ENCODE measurements at regions of chr15 and their contacts with region 1.

Region 1: DNA sequence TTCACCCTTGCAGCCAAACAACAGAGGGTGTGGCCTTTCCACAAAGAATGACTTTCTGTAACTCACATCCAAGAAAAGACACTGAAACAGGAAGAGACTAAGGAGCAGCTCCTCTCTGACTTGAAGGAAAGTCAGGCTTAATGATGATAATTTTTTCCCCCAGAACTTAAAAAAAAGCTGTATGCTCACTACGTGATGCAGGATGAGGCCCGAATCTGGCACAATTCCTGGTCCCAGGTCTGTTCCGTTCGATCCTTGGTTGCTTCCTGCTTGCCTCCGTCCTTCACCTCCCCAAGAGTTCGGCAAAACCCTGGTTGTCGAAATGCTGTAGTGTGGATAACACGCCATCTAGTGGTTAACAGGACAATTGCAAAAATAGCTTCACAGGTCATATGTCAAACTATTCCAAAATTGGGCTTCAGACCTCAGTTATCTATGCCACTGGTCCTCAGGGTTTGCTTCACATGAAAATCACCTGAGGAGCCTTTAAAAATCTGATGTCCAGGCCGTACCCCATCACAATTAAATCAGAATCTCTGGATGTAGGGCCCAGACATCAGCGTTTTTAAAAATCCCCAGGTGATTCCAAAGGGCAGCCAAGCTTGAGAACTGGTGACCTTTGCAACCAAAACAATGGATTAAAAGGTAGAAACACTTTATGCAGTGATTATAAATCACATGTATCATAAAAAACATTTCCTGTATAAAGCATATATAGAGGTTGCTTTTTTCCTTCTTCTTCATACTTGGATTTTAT is 28.1 kb upstream of the SYNM start:
- DNase-seq: no peak
- ATAC-seq: peak; percentile 87

Region 2: GRCh38 chr15:98442379-98442833 is 634.3 kb before region 1 on chr15:
- intact Hi-C with region 1: loop called (anchors 5 kb)
- DNase-seq: no peak
- ATAC-seq: no peak

Region 3: GRCh38 chr15:99009741-99010370 is 66.9 kb before region 1 on chr15:
- intact Hi-C with region 1: no loop called
- DNase-seq: no peak
- ATAC-seq: no peak